ENCODE measurements at regions of chr7 and their contacts with region 1.

Region 1: GRCh38 chr7:117715784-117716445 is 157.3 kb downstream of the CTTNBP2 start:
- DNase-seq: peak; percentile 55 to 56
- H3K4me3 ChIP-seq: no peak overlapping the region
- H3K27ac ChIP-seq: no peak overlapping the region
- H3K4me1 ChIP-seq: no peaks in the 10 kb centered on the region
- H3K27me3 ChIP-seq: no peaks in the 10 kb centered on the region
- CTCF ChIP-seq: peak; percentile 72

Region 2: DNA sequence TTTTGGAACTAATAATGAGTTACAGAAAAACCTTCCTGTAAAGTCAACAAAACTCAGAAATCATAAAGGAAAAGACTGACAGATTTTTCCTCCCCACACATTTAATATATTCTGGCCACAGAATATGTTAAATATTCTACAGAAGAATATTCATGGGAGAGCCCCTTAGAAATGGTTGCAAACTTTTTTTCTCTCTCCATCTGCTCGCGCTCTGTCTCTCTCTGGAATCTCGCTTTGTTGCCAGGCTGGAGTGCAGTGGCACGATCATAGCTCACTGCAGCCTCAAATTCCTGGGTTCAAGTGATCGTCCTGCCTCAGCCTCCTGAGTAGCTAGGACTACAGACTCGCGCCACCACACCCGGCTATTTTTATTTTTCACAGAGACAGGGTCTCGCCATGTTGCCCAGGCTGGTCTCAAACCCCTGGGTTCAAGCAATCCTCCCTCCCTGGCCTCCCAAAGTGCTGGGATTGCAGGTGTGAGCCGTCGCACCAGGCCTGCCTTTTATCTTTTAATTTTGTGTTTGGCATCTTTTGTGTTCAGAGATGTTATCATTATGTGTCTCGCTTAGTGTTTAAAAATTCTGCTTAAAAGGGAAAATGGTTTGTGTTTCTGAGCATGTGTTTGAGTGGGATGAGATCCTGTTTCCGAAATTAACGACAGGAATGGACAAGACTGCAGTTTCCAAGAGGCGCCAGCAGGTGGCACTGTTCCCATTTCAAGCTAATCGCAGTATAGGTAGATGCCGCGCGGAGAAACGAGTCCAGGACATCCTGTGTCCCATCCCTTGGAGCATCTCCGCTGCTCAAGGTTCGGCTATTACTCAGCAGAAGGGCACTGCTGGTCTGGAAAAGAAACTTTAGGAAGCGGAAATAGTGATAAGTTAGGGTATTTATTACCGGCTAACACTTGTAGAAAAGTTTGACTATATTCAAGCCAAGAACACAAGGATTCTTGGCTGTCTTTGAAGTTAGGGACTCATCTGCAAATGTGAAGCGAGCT is 785.7 kb before region 1 on chr7:
- CTCF ChIA-PET with region 1: no interaction called
- POLR2A ChIA-PET with region 1: no interaction called
- intact Hi-C with region 1: loop called (anchors 2 kb)
- DNase-seq: peak; percentile 51 to 75
- H3K4me3 ChIP-seq: no peak overlapping the region
- H3K27ac ChIP-seq: no peak overlapping the region
- H3K4me1 ChIP-seq: no peaks in the 10 kb centered on the region
- H3K27me3 ChIP-seq: no peaks in the 10 kb centered on the region
- CTCF ChIP-seq: peak; percentile 95

Region 3: GRCh38 chr7:117399820-117400422 is 316.0 kb before region 1 on chr7:
- CTCF ChIA-PET with region 1: interaction called, 6 read pairs
- POLR2A ChIA-PET with region 1: no interaction called
- intact Hi-C with region 1: loop called (anchors 1 kb)
- DNase-seq: no peak
- H3K4me3 ChIP-seq: no peak overlapping the region
- H3K27ac ChIP-seq: no peak overlapping the region
- H3K4me1 ChIP-seq: no peaks in the 10 kb centered on the region
- H3K27me3 ChIP-seq: no peaks in the 10 kb centered on the region
- CTCF ChIP-seq: peak; percentile 70

Region 4: GRCh38 chr7:117582219-117582704 is 133.7 kb before region 1 on chr7:
- CTCF ChIA-PET with region 1: no interaction called
- POLR2A ChIA-PET with region 1: no interaction called
- intact Hi-C with region 1: loop called (anchors 5 kb)
- DNase-seq: peak; percentile 63 to 78
- H3K4me3 ChIP-seq: no peak overlapping the region
- H3K27ac ChIP-seq: peak overlapping the region; percentile 18; the same call in 1 of the 2 replicates
- H3K4me1 ChIP-seq: no peaks in the 10 kb centered on the region
- H3K27me3 ChIP-seq: no peaks in the 10 kb centered on the region
- CTCF ChIP-seq: no peak